HEK293T (cell line): ENCODE measurements at regions of chr11 and their contacts with region 1.

Region 1: DNA sequence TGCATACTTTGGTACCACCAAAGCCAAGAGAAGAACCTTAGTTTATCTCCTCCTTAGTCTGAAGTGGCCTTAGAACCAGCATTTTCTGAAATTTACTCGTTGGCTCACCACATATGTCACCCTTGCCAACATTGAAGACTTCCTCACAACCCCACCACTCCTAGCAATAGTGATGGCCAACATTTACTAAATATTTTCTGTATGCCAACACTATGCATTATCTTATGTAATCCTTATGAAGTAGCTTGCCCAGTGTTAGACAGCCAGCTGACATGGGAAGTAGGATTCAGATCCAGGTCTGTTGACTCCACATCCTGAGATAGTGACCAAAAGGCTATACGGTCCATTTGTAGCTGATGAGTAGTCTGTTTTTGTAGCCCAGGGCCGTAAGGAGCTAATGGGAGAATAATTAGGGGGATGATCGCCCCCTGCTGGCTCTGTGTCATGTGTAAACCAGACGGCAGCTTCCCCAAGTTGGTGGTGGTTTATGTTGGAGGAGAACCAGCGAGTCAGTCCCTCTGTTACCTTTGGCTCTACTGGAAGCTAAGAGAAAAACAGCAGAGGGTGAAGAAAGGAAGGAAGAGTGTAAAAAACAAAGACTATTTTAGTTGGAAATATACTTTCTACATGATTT is 120.5 kb upstream of the RASSF10 start:
- DNase-seq: peak; percentile 63

Region 2: GRCh38 chr11:12599408-12600143 is 289.1 kb before region 1 on chr11:
- CTCF ChIA-PET with region 1: interaction called, 10 read pairs
- POLR2A ChIA-PET with region 1: no interaction called
- DNase-seq: peak; percentile 70

Region 3: DNA sequence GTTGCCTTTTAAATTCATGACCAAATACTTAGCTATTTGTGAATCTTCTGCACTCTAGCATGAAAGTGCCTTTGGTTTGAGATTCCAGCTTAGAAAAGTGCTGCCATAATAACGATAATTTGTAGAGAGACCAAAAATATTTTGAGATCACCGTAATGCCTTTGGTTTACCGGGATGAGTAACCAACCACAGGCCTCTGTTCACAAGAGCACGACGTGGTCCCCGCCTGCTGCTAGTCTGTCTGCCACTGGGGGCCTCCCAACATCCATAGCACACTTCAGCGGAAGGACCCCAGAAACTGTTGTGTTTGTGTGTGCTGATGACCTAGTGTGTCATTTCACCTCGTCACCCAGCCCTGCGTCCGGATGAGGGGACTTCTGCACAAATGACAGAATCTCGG is 53.5 kb after region 1 on chr11:
- CTCF ChIA-PET with region 1: no interaction called
- POLR2A ChIA-PET with region 1: no interaction called
- DNase-seq: no peak